Heart left ventricle (tissue), 16 donors: ENCODE measurements at regions of chr14 and their contacts with region 1.

Region 1: DNA sequence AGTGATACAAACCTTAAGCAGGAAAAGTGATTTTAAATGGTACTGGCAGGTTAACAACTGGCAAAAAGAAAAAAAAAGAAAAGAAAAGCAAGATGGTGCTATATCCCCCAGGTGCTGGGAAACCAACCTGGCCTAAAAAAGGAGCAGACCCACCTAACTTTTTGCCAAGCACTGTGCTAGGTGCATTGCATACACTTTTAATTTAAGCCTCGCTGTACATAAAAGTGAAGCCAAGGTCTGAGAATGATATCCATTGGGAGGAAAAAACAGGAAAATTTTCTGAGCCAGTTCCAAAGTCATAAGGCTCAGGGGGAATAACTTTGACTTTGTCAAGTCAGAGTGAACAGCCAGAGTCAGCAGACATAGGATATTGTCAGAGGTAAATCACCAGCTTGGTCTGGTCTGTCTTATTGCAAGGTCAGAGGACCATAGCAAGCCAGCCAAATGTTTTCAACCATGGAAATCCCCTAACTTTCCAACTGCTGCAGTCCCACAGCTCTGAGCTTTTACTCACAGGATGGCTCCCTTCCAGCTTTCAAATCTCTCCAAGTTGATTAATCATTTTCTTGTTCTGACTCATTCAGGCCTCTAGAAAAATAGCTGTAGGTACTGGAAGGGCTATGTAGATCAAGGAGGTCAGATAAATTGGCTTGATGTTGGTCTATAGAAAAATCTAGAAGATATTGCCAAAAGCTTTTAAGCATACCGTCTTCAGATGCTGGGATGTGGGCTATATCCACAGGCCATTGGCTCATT is 412.9 kb downstream of the RAD51B start:
- DNase-seq: peak in 4 of 5 donors; percentile 41 to 78 (median 54)
- ATAC-seq: peak; percentile 79 to 97 (median 96)
- H3K4me3 ChIP-seq: no peak overlapping the region
- H3K27ac ChIP-seq: peak overlapping the region; percentile 33 to 85 (median 64)
- H3K4me1 ChIP-seq: peaks cover 8 to 38% (median 20%) of the 10 kb centered on the region in 12 donors
- H3K27me3 ChIP-seq: no peaks in the 10 kb centered on the region
- CTCF ChIP-seq: no peak
- POLR2A ChIP-seq: no peak

Region 2: GRCh38 chr14:67532998-67533753 is 699.3 kb before region 1 on chr14 and contains the start of gene PLEKHH1:
- intact Hi-C with region 1: no loop called
- DNase-seq: peak; percentile 80 to 89 (median 81)
- ATAC-seq: peak; percentile 97 to 99 (median 98)
- H3K4me3 ChIP-seq: peak within 1 kb of the TSS; percentile 28 to 79 (median 70)
- H3K27ac ChIP-seq: peak within 1 kb of the TSS in 11 of 12 donors; percentile 19 to 77 (median 53)
- H3K4me1 ChIP-seq: peaks cover 0 to 15% (median 5%) of the 10 kb centered on the region in 12 donors
- H3K27me3 ChIP-seq: peaks cover 0 to 29% (median 0%) of the 10 kb centered on the region in 9 donors
- CTCF ChIP-seq: peak in 1 of 12 donors; percentile 3
- POLR2A ChIP-seq: peak in 1 of 2 donors; percentile 59
- total RNA-seq, gene PLEKHH1: 2.4 to 9.2 (median 5.2) TPM

Region 3: DNA sequence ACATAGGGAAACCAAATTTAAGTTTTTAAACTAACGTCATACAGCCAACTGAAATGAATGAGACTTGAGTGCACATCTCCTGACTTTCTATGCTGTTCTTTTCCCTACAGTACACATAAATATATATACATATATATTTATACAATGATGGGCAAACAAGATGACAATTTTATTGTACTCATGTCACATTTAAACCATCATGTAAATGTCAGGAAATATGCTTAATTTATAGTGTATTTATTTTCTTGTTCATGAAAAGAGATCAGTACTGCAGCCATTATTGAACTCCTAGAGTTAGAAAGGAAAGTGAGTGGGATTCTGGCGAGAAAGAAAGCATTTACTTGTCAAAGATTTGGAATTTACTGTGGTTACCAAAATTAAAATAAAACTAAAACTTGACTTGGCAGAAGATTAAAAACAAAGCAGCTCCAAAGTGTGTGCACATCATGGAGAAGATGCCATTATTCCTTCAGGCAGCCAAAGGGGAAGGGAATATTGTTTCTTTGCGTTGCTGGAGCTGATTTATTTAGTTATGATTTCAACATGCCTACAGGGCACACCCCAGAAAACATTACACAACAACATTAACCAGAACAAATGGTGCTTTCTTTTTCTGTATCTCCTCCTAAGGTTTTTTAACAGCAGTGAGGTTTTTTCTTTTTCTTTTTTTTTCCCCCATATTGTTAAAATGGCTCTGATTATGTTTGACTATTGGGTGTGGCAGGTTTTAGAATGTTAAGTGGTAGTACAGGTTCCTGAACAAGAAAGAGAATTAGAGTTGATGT is 268.3 kb before region 1 on chr14:
- intact Hi-C with region 1: loop called in 1 of 10 experiments (anchors 10 kb)
- DNase-seq: no peak
- ATAC-seq: peak in 1 of 4 donors; percentile 56
- H3K4me3 ChIP-seq: peak overlapping the region in 5 of 12 donors; percentile 1 to 41 (median 18)
- H3K27ac ChIP-seq: peak overlapping the region in 4 of 12 donors; percentile 3 to 73 (median 12)
- H3K4me1 ChIP-seq: peaks cover 0 to 33% (median 0%) of the 10 kb centered on the region in 12 donors
- H3K27me3 ChIP-seq: no peaks in the 10 kb centered on the region
- CTCF ChIP-seq: no peak
- POLR2A ChIP-seq: no peak

Region 4: GRCh38 chr14:68076451-68076850 is 156.0 kb before region 1 on chr14:
- intact Hi-C with region 1: loop called in 1 of 10 experiments (anchors 10 kb)
- DNase-seq: no peak
- ATAC-seq: no peak
- H3K4me3 ChIP-seq: no peak overlapping the region
- H3K27ac ChIP-seq: no peak overlapping the region
- H3K4me1 ChIP-seq: no peaks in the 10 kb centered on the region
- H3K27me3 ChIP-seq: no peaks in the 10 kb centered on the region
- CTCF ChIP-seq: no peak
- POLR2A ChIP-seq: no peak

Region 5: DNA sequence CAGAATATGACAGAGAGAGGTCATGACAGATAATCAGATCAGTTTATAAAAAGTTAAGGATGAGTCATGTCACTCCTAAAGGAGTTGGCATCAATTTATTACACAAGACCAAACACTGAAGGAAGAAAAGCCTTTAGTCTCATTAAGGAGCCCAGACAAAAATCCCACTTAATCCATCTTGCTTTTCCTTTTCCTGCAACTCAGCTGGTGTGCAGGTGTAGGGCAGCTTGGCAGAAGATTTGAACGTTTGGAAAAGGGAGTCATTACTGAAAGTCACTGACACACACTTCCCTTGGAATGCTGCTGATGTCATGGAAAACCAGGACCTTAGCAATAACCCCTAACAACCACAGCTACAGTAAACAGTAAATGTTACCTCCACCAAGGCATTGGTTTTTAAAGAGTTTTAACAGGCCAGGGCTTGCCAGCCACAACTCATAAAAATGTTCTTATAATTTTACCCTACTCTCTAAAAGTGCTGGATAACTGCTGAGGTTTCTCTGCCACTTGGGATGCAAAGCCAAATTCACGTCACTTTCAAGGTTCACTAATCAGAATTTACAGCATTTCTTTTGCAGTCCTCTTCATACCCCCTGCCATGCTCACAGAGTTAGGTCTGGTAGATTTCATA is 92.3 kb before region 1 on chr14:
- intact Hi-C with region 1: loop called in 3 of 10 experiments (anchors 2 to 10 kb)
- DNase-seq: peak in 4 of 5 donors; percentile 24 to 61 (median 42)
- ATAC-seq: peak in 3 of 4 donors; percentile 48 to 73 (median 56)
- H3K4me3 ChIP-seq: no peak overlapping the region
- H3K27ac ChIP-seq: peak overlapping the region in 11 of 12 donors; percentile 35 to 89 (median 53)
- H3K4me1 ChIP-seq: peaks cover 3 to 71% (median 35%) of the 10 kb centered on the region in 12 donors
- H3K27me3 ChIP-seq: no peaks in the 10 kb centered on the region
- CTCF ChIP-seq: no peak
- POLR2A ChIP-seq: peak in 1 of 2 donors; percentile 32

Region 6: DNA sequence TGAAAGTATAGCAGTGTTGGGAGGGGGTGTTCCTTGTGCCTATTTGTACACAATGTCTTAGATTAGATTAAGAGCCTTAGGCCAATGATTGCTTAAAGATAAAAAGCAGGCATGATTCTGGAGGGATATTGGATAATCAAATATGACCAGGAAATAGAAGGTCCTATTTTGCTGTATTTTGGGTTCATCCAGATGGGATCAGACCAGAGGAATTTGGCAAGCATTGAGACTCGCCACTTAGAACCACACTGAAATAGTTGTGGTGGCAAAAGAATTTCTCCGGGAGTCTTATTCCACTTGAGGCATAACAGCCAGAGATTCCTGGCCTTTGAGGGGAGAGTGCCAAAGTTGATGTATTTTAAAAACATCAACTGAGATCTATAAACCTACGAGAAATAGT is 85.7 kb before region 1 on chr14:
- intact Hi-C with region 1: loop called in 3 of 10 experiments (anchors 2 to 10 kb)
- DNase-seq: no peak
- ATAC-seq: peak in 2 of 4 donors; percentile 14 to 36
- H3K4me3 ChIP-seq: no peak overlapping the region
- H3K27ac ChIP-seq: peak overlapping the region in 9 of 12 donors; percentile 15 to 89 (median 64)
- H3K4me1 ChIP-seq: peaks cover 0 to 40% (median 20%) of the 10 kb centered on the region in 12 donors
- H3K27me3 ChIP-seq: no peaks in the 10 kb centered on the region
- CTCF ChIP-seq: no peak
- POLR2A ChIP-seq: no peak

Region 7: DNA sequence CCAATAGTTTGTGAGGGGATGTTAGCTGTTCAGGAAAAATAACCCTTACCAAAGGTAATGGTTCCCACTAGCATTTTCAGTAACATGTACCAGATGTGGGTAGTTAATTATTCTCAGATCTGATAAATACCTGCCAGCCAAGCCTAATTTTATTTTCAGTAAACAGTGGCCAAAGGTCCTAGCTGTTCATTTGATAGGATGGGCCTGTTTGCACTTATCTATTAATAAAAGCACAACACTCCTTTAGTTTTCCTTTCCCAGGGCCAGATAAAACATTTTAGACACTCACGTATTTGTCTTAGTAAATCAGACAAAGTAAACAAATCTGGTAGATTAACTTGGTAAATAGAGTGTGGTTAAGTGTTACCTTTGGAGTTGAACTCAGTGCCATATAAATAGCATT is 67.8 kb before region 1 on chr14:
- intact Hi-C with region 1: loop called in 1 of 10 experiments (anchors 10 kb)
- DNase-seq: no peak
- ATAC-seq: no peak
- H3K4me3 ChIP-seq: no peak overlapping the region
- H3K27ac ChIP-seq: peak overlapping the region in 5 of 12 donors; percentile 12 to 80 (median 26)
- H3K4me1 ChIP-seq: peaks cover 0 to 8% (median 0%) of the 10 kb centered on the region in 12 donors
- H3K27me3 ChIP-seq: no peaks in the 10 kb centered on the region
- CTCF ChIP-seq: no peak
- POLR2A ChIP-seq: no peak